HCT116 (cell line): ENCODE measurements at regions of chr2 and their contacts with region 1.

Region 1: GRCh38 chr2:177148477-177149154 is 64.0 kb upstream of the HNRNPA3 start:
- DNase-seq: peak; percentile 68
- ATAC-seq: peak; percentile 99
- H3K4me3 ChIP-seq: peak overlapping the region; percentile 25 to 51
- H3K27ac ChIP-seq: no peak overlapping the region
- H3K4me1 ChIP-seq: peaks cover 0 to 8% of the 10 kb centered on the region in 2 experiments; a peak in 2 of 4 replicates
- H3K27me3 ChIP-seq: no peaks in the 10 kb centered on the region
- CTCF ChIP-seq: peak; percentile 82 to 94 (median 90); a peak in 5 of 6 replicates
- POLR2A ChIP-seq: no peak
- RAD21 ChIP-seq: peak; percentile 79

Region 2: DNA sequence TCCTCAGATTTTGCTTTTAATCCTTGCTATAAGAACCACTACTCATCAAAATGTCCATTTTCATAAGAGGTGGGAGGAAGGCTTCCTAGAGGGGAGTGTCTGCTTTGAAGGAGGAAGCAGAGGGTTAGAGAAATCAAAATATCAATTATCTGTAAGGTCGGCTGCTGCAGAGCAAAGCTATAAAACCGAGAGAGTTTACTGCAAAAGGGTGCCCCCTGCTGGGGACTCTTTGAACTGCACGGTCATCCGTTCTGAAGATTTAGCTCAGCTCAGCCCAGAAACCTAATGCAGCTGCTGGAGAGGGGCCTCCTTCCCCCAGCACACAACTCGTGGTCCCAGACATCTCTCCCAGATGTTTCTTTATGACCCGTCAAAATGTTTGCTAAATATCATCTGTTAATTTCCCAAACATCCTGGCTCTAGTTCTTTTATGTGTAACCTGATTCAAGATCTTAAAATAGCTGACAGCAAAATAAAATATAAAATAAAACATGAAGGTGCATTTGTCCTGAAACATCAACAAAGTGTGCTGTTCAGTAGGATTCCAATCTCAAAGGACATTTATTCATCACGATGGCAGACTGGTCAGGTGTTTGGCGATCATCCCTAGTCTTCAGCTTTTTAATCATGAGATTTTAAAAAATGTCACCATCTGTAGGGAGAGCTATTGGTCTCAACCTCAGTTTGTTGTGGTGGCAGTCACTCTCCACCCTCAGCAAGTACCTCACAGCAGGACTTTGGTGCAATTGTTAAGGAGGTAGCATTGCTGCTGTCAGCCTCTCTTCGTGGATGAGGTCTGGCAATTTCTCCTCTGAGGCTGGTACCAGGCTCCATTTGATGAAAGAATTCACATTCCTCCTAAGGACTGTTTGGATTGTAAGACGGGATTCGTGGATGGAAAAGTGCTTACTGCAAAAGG is 693.5 kb before region 1 on chr2:
- CTCF ChIA-PET with region 1: interaction called, 7 read pairs
- POLR2A ChIA-PET with region 1: no interaction called
- RAD21 ChIA-PET with region 1: no interaction called
- intact Hi-C with region 1: loop called (anchors 10 kb)
- DNase-seq: peak; percentile 45
- ATAC-seq: peak; percentile 90
- H3K4me3 ChIP-seq: no peak overlapping the region
- H3K27ac ChIP-seq: no peak overlapping the region
- H3K4me1 ChIP-seq: 0 out of 4 replicates have a peak, but pooled peaks cover 0 to 3% of the 10 kb centered on the region in 2 experiments
- H3K27me3 ChIP-seq: no peaks in the 10 kb centered on the region
- CTCF ChIP-seq: peak; percentile 85 to 91 (median 85)
- POLR2A ChIP-seq: no peak
- RAD21 ChIP-seq: peak; percentile 86

Region 3: GRCh38 chr2:176638167-176639015 is 510.2 kb before region 1 on chr2:
- CTCF ChIA-PET with region 1: interaction called, 4 read pairs
- POLR2A ChIA-PET with region 1: no interaction called
- RAD21 ChIA-PET with region 1: interaction called in 1 of 2 experiments, 5 read pairs
- intact Hi-C with region 1: loop called (anchors 5 kb)
- DNase-seq: no peak
- ATAC-seq: peak; percentile 91
- H3K4me3 ChIP-seq: peak overlapping the region; percentile 10 to 31; a peak in 3 of 4 replicates
- H3K27ac ChIP-seq: no peak overlapping the region
- H3K4me1 ChIP-seq: peaks cover 0 to 9% of the 10 kb centered on the region in 2 experiments; a peak in 1 of 4 replicates
- H3K27me3 ChIP-seq: no peaks in the 10 kb centered on the region
- CTCF ChIP-seq: peak; percentile 53 to 89 (median 54)
- POLR2A ChIP-seq: no peak
- RAD21 ChIP-seq: peak; percentile 84

Region 4: DNA sequence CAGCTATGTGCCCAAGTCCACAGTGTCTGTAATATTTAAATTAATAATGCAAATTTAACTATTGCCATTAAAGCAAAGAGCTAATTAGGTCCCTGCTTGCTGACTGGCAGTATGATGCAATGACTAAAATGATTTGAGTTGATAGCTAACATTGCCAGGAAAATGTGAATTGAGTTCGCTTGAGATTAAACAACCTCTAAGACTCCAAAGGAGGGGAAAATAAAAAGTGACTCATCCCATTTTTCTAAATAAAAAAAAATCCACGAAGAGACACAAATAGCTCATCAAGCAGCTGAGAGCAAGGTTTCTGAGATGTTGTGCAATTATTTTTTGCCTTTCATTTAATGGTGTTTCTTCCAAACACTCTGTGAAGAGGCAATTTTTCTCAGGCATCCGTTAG is 466.3 kb before region 1 on chr2:
- CTCF ChIA-PET with region 1: no interaction called
- POLR2A ChIA-PET with region 1: no interaction called
- RAD21 ChIA-PET with region 1: no interaction called
- intact Hi-C with region 1: loop called (anchors 10 kb)
- DNase-seq: no peak
- ATAC-seq: no peak
- H3K4me3 ChIP-seq: no peak overlapping the region
- H3K27ac ChIP-seq: no peak overlapping the region
- H3K4me1 ChIP-seq: no peaks in the 10 kb centered on the region
- H3K27me3 ChIP-seq: peaks cover 80% of the 10 kb centered on the region
- CTCF ChIP-seq: no peak
- POLR2A ChIP-seq: no peak
- RAD21 ChIP-seq: no peak

Region 5: DNA sequence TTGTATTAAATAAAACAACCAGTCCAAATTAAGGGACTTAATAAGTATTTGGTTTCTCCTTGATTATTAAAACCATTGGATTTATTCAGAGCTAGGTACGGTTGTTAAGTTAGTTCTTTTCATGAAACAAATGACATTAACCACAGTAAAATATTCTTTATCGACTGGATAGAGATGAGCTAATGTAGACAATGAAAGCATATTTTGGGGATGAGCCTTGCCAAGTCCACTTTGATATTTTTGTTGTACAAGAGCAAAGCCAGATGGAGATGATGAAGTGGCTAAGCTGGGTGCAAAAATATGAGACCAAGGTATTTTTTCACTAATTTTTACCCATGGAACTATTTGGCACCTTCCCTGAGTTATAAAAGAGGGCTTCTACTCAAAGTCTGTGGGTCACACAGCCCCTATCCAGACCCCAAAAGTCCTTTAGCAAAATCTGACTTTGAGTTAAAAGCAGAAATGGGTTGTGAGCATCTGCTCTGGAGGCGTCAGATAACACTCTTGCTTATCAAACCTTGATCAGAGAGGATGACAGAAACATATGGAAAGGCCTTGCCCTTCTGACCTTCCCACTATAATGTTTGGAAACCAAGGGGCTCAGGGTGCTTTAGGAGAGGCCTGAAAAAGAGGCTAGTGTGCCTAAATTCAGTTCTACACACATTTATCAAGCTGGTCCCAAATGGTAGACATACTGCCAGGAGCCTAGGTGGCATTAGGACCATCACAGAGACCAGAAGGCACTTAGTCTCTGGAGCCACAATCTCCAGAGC is 422.6 kb before region 1 on chr2:
- CTCF ChIA-PET with region 1: no interaction called
- POLR2A ChIA-PET with region 1: no interaction called
- RAD21 ChIA-PET with region 1: no interaction called
- intact Hi-C with region 1: no loop called
- DNase-seq: no peak
- ATAC-seq: no peak
- H3K4me3 ChIP-seq: no peak overlapping the region
- H3K27ac ChIP-seq: no peak overlapping the region
- H3K4me1 ChIP-seq: peaks cover 0 to 2% of the 10 kb centered on the region in 2 experiments; a peak in 1 of 4 replicates
- H3K27me3 ChIP-seq: peaks cover 41% of the 10 kb centered on the region
- CTCF ChIP-seq: no peak
- POLR2A ChIP-seq: no peak
- RAD21 ChIP-seq: no peak

Region 6: DNA sequence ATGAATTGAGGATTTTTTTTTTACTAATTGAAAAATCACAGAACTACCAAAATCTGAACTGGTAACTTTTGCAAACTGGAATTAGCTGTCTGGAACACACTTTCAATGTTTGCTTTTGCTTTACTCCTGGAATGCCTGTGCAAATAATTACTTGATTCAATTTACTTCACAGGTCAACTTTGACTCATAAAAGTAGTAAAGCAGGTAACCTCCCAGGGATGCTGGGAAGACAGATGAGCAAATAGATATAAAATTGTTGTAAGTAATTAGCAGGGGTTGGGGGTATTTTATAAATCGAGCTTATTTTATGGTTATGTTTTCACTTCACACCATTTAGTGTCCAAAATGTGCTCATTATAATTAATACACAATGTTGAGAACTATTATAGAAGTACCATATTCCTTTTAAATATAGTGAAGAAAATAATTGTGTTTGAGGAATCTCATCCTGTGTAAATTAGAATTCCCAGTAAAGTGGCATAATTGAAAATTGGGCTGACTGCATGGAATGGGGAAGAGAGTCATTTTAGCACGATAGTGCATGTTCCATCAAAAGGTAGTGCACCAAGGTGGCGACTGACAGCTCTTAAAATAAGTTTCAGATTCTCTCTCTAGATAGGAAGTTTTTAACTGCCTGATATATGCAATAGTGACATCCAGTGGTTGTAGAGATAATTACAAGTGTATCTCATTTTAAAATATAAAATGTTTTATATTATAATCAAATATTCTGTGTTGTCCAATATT is 334.1 kb before region 1 on chr2:
- CTCF ChIA-PET with region 1: interaction called, 36 read pairs
- POLR2A ChIA-PET with region 1: interaction called, 3 read pairs
- RAD21 ChIA-PET with region 1: no interaction called
- intact Hi-C with region 1: loop called (anchors 5 kb)
- DNase-seq: peak; percentile 12
- ATAC-seq: peak; percentile 69
- H3K4me3 ChIP-seq: no peak overlapping the region
- H3K27ac ChIP-seq: no peak overlapping the region
- H3K4me1 ChIP-seq: no peaks in the 10 kb centered on the region
- H3K27me3 ChIP-seq: 0 out of 2 replicates have a peak, but pooled peaks cover 9% of the 10 kb centered on the region
- CTCF ChIP-seq: peak; percentile 25 to 61 (median 40); a peak in 3 of 6 replicates
- POLR2A ChIP-seq: no peak
- RAD21 ChIP-seq: peak; percentile 70

Region 7: DNA sequence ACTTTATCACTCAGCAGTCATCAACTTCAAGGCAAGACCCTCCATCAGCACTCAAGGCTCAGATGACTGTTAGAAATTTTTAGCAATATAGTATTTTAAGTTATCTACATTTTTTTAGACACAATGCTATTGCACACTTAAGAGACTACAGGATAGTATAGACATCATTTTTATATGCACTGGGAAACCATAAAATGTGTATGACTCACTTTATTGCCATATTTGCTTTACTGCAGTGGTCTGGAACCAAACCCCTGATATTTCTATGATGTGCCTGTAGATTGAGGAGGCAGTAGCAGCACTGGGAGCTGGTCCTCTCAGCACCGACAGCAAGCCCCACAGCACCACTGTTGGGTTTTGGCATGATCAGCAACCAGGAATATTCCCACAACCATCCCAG is 200.9 kb before region 1 on chr2:
- CTCF ChIA-PET with region 1: no interaction called
- POLR2A ChIA-PET with region 1: no interaction called
- RAD21 ChIA-PET with region 1: no interaction called
- intact Hi-C with region 1: no loop called
- DNase-seq: no peak
- ATAC-seq: no peak
- H3K4me3 ChIP-seq: no peak overlapping the region
- H3K27ac ChIP-seq: no peak overlapping the region
- H3K4me1 ChIP-seq: no peaks in the 10 kb centered on the region
- H3K27me3 ChIP-seq: peaks cover 16% of the 10 kb centered on the region; the same call in 1 of the 2 replicates
- CTCF ChIP-seq: no peak
- POLR2A ChIP-seq: no peak
- RAD21 ChIP-seq: no peak

Region 8: GRCh38 chr2:177029480-177029879 is 119.1 kb before region 1 on chr2:
- CTCF ChIA-PET with region 1: no interaction called
- POLR2A ChIA-PET with region 1: no interaction called
- RAD21 ChIA-PET with region 1: no interaction called
- intact Hi-C with region 1: loop called (anchors 5 kb)
- DNase-seq: peak; percentile 32
- ATAC-seq: peak; percentile 99
- H3K4me3 ChIP-seq: no peak overlapping the region
- H3K27ac ChIP-seq: no peak overlapping the region
- H3K4me1 ChIP-seq: no peaks in the 10 kb centered on the region
- H3K27me3 ChIP-seq: peaks cover 42% of the 10 kb centered on the region
- CTCF ChIP-seq: peak; percentile 70 to 78 (median 75)
- POLR2A ChIP-seq: no peak
- RAD21 ChIP-seq: peak; percentile 48

Region 9: DNA sequence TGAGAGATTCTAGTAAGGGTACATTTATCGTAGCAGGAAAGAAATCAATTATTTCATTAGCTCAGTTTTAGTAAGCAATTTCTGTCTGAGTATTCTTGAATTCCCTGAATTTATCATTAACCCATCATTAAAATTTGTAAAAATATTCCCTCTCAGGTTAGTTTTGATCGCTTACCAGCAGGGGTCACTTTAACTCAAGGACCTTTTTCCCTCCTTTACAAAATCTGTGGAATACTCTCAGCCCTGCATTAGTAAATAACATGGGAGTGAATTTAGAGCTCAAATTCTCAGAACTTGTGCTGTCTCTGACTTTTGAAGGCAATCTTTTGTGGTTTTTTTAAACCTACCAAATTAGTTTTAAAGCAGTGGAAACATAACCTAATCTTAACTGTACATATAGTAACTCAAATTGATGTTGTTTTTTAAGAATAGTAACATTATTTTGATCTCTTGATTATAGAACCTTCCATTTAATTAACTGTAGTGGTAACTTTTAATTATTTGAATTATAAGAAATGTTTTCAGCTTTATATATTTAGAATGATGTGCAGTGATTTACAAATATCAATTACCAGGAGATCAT is 341.2 kb after region 1 on chr2:
- CTCF ChIA-PET with region 1: no interaction called
- POLR2A ChIA-PET with region 1: no interaction called
- RAD21 ChIA-PET with region 1: no interaction called
- intact Hi-C with region 1: no loop called
- DNase-seq: peak; percentile 8
- ATAC-seq: peak; percentile 59; the same call in 1 of the 2 replicates
- H3K4me3 ChIP-seq: no peak overlapping the region
- H3K27ac ChIP-seq: no peak overlapping the region
- H3K4me1 ChIP-seq: no peaks in the 10 kb centered on the region
- H3K27me3 ChIP-seq: no peaks in the 10 kb centered on the region
- CTCF ChIP-seq: peak; percentile 51 to 74 (median 63); a peak in 5 of 6 replicates
- POLR2A ChIP-seq: no peak
- RAD21 ChIP-seq: peak; percentile 62